ENCODE measurements at regions of chr15 and their contacts with region 1.

Region 1: GRCh38 chr15:40338041-40338657 is 2.6 kb downstream of the CCDC9B start:
- DNase-seq: no peak
- ATAC-seq: peak; percentile 94
- H3K4me3 ChIP-seq: no peak overlapping the region
- H3K27ac ChIP-seq: no peak overlapping the region
- H3K4me1 ChIP-seq: peaks cover 9% of the 10 kb centered on the region
- H3K27me3 ChIP-seq: no peaks in the 10 kb centered on the region; a peak in 1 of 4 replicates
- CTCF ChIP-seq: peak; percentile 90 to 95 (median 92)
- EP300 ChIP-seq: no peak
- POLR2A ChIP-seq: no peak
- RAD21 ChIP-seq: peak; percentile 73

Region 2: DNA sequence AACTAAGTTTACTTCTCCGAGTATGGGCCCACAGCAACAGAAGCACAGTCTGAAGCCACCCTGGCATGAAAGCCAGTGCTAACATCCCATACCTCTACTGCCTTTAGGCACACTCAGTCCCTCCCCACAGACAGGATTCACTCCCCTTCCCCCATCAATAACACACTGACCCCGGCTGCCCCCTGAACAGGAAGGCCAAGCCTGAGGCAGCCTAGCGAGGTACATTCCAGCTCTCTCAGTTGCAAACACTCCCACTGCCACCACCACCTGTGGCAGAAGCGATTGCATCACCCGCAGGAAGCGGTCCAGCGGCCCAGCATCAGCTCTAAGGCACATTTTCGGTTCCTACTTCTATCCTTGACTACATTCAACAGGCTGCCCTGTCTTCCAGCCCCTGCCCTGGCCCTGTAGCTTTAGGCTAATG is 222.5 kb before region 1 on chr15:
- CTCF ChIA-PET with region 1: no interaction called
- POLR2A ChIA-PET with region 1: no interaction called
- RAD21 ChIA-PET with region 1: no interaction called
- SMC1A ChIA-PET with region 1: no interaction called
- in situ Hi-C with region 1: no loop called
- intact Hi-C with region 1: no loop called
- DNase-seq: peak; percentile 83
- ATAC-seq: peak; percentile 97
- H3K4me3 ChIP-seq: no peak overlapping the region
- H3K27ac ChIP-seq: peak overlapping the region; percentile 69
- H3K4me1 ChIP-seq: peaks cover 30% of the 10 kb centered on the region
- H3K27me3 ChIP-seq: no peaks in the 10 kb centered on the region
- CTCF ChIP-seq: no peak
- EP300 ChIP-seq: peak; percentile 40 to 77; a peak in 3 of 4 replicates
- POLR2A ChIP-seq: peak; percentile 62
- RAD21 ChIP-seq: no peak

Region 3: GRCh38 chr15:40307421-40308211 is 30.5 kb before region 1 on chr15 and contains the start of gene PLCB2:
- CTCF ChIA-PET with region 1: interaction called, 336 read pairs
- POLR2A ChIA-PET with region 1: no interaction called
- RAD21 ChIA-PET with region 1: interaction called, 17 read pairs
- SMC1A ChIA-PET with region 1: interaction called, 10 read pairs
- in situ Hi-C with region 1: no loop called
- intact Hi-C with region 1: no loop called
- DNase-seq: peak; percentile 16
- ATAC-seq: peak; percentile 78
- H3K4me3 ChIP-seq: peak within 1 kb of the TSS; percentile 80
- H3K27ac ChIP-seq: peak within 1 kb of the TSS; percentile 78
- H3K4me1 ChIP-seq: peaks cover 12% of the 10 kb centered on the region
- H3K27me3 ChIP-seq: peaks cover 0 to 1% of the 10 kb centered on the region in 2 experiments; a peak in 1 of 4 replicates
- CTCF ChIP-seq: peak; percentile 27 to 46 (median 39); a peak in 5 of 6 replicates
- EP300 ChIP-seq: no peak
- POLR2A ChIP-seq: peak; percentile 87
- RAD21 ChIP-seq: no peak
- polyA plus RNA-seq, gene PLCB2: 1.3 to 2.4 TPM

Region 4: DNA sequence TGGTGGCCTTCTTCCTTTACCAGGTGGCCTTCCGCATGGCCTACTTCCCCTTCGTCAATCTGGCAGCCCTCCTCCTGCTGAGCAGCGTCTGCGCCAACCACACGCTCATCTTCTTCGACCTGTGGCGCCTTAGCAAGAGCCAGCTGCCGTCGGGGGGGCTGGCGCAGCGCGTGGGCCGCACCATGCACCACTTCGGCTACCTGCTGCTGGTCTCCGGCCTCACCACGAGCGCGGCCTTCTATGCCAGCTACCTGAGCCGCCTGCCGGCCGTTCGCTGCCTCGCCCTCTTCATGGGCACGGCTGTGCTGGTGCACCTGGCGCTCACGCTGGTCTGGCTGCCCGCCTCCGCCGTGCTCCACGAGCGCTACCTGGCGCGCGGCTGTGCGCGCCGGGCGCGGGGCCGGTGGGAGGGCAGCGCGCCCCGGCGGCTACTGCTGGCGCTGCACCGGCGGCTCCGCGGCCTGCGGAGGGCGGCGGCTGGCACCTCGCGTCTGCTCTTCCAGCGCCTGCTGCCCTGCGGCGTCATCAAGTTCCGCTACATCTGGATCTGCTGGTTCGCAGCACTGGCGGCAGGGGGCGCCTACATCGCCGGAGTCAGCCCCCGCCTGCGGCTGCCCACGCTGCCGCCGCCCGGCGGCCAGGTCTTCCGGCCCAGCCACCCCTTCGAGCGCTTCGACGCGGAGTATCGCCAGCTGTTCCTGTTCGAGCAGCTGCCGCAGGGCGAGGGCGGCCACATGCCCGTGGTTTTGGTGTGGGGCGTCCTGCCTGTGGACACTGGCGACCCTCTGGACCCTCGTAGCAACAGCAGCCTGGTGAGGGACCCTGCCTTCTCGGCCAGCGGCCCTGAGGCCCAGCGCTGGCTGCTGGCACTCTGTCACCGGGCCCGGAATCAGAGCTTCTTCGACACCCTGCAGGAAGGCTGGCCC is 29.8 kb after region 1 on chr15:
- CTCF ChIA-PET with region 1: interaction called, 15 read pairs
- POLR2A ChIA-PET with region 1: no interaction called
- RAD21 ChIA-PET with region 1: no interaction called
- SMC1A ChIA-PET with region 1: interaction called, 3 read pairs
- in situ Hi-C with region 1: no loop called
- intact Hi-C with region 1: no loop called
- DNase-seq: peak; percentile 27
- ATAC-seq: peak; percentile 93
- H3K4me3 ChIP-seq: peak overlapping the region; percentile 2; the same call in 1 of the 2 replicates
- H3K27ac ChIP-seq: no peak overlapping the region
- H3K4me1 ChIP-seq: peaks cover 8% of the 10 kb centered on the region
- H3K27me3 ChIP-seq: peaks cover 3 to 5% of the 10 kb centered on the region in 2 experiments
- CTCF ChIP-seq: peak; percentile 67 to 88 (median 81)
- EP300 ChIP-seq: no peak
- POLR2A ChIP-seq: no peak; the same call in 1 of the 2 replicates
- RAD21 ChIP-seq: peak; percentile 54

Region 5: GRCh38 chr15:40416056-40416455 is 77.9 kb after region 1 on chr15:
- CTCF ChIA-PET with region 1: interaction called, 111 read pairs
- POLR2A ChIA-PET with region 1: no interaction called
- RAD21 ChIA-PET with region 1: no interaction called
- SMC1A ChIA-PET with region 1: no interaction called
- in situ Hi-C with region 1: no loop called
- intact Hi-C with region 1: no loop called
- DNase-seq: no peak
- ATAC-seq: no peak
- H3K4me3 ChIP-seq: no peak overlapping the region
- H3K27ac ChIP-seq: no peak overlapping the region
- H3K4me1 ChIP-seq: no peaks in the 10 kb centered on the region
- H3K27me3 ChIP-seq: no peaks in the 10 kb centered on the region
- CTCF ChIP-seq: no peak
- EP300 ChIP-seq: no peak
- POLR2A ChIP-seq: no peak
- RAD21 ChIP-seq: no peak